ENCODE measurements at regions of chr17 and their contacts with region 1.

Region 1: GRCh38 chr17:4480929-4481898 is 17.5 kb upstream of the SPNS2 start:
- DNase-seq: peak; percentile 73
- ATAC-seq: peak; percentile 93
- H3K4me3 Mint-ChIP-seq: peak overlapping the region; percentile 64
- H3K27ac Mint-ChIP-seq: peak overlapping the region; percentile 91
- H3K4me1 Mint-ChIP-seq: peaks cover 41% of the 10 kb centered on the region
- H3K27me3 Mint-ChIP-seq: no peaks in the 10 kb centered on the region

Region 2: DNA sequence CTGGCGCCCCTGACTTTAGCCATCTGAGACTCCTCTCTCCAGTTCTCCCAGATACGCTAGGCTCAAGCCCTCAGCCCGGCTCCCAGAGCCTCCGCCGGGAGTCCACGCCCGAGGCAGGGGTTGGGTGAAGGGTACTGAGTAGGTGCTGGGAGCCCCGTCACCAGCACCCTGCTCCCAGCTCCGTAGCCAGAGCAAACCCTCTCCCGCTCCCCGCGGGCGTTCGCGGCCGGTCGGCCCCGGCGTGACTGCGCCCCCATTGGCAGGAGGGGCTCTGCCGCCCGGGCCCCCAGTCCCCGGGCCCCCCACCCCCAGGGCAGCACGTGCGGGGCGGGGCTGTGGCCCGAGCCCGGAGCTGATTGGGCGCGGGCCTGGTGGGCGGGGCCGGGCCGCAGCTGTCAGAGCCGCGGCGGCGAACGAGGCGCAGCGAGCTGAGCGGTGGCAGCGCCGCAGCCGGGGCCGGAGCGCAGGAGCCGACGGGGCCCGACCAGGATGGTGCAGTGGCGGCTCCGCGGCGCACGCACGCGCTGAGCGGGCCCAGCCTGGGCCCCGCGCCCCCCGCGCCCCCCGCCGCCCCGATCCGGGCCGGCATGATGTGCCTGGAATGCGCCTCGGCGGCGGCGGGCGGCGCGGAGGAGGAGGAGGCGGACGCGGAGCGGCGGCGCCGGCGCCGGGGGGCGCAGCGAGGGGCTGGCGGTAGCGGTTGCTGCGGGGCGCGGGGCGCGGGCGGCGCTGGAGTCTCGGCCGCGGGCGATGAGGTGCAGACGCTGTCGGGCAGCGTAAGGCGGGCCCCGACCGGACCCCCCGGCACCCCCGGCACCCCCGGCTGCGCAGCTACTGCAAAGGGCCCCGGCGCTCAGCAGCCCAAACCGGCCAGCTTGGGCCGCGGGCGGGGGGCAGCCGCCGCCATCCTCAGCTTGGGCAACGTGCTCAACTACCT is 17.5 kb after region 1 on chr17 and contains the start of gene SPNS2:
- POLR2A ChIA-PET with region 1: interaction called, 21 read pairs
- DNase-seq: peak; percentile 83
- ATAC-seq: peak; percentile 83
- H3K4me3 Mint-ChIP-seq: peak within 1 kb of the TSS; percentile 81
- H3K27ac Mint-ChIP-seq: peak within 1 kb of the TSS; percentile 43
- H3K4me1 Mint-ChIP-seq: peaks cover 30% of the 10 kb centered on the region
- H3K27me3 Mint-ChIP-seq: peaks cover 37% of the 10 kb centered on the region
- total RNA-seq, gene SPNS2: 6.7 to 6.9 TPM

Region 3: GRCh38 chr17:4534026-4534914 is 53.1 kb after region 1 on chr17:
- POLR2A ChIA-PET with region 1: no interaction called
- DNase-seq: no peak
- ATAC-seq: no peak
- H3K4me3 Mint-ChIP-seq: no peak overlapping the region
- H3K27ac Mint-ChIP-seq: peak overlapping the region; percentile 45
- H3K4me1 Mint-ChIP-seq: peaks cover 8% of the 10 kb centered on the region
- H3K27me3 Mint-ChIP-seq: peaks cover 2% of the 10 kb centered on the region